B cell (primary cell): ENCODE measurements at regions of chr9 and their contacts with region 1.

Region 1: DNA sequence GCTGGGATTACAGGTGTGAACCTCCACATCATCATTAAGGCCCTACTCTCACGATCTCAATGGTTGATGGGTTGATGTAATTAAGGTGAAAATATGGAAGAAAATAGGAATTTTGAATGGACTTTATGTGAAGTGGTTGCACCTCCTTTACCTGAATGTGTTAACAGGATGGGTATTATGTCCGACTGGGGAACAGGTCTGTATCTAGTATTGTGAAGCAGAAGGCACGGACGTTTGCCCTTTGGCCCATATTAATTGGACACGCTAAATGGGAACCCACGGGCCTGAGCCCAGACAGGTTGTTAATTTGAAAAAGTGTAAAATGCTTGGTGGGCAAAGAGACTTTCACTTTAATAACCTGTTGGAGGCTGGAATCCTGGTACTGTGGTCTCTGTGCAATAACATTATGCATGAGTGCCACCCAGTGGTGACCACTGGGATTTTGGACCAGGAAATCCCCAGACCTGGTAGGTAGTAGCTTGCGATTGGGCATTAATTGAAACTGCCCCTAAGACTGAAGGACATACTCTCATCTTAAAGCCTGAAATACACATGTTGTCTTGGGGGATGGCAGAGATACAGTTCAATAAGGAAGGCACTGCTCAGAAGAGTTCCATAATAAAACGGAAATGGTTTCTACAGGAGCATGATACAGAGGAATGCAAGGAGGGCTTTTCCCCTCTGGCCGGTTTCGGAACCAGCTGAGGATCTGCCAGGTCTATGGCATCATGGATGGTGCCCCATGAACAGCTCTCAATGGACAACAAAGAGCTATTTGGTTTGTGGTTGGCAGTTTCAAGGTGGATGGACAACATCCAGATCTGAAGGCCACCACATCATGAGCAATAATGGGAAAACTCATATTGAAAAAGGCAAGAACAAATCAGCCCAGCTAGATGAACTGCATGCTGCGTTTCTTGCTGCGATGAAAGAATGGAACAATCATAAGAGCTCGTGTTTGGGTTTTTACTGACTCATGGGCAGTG is 26.2 kb upstream of the BICD2 start:
- DNase-seq: peak; percentile 88
- ATAC-seq: peak; percentile 97
- H3K4me3 ChIP-seq: no peak overlapping the region
- H3K4me3 Mint-ChIP-seq: no peak overlapping the region
- H3K27ac ChIP-seq: no peak overlapping the region
- H3K27ac Mint-ChIP-seq: no peak overlapping the region
- H3K4me1 ChIP-seq: peaks cover 3 to 7% of the 10 kb centered on the region in 2 donors
- H3K4me1 Mint-ChIP-seq: peaks cover 3% of the 10 kb centered on the region
- H3K27me3 ChIP-seq: peaks cover 0 to 7% (median 0%) of the 10 kb centered on the region in 4 experiments
- H3K27me3 Mint-ChIP-seq: peaks cover 24% of the 10 kb centered on the region
- CTCF ChIP-seq: peak; percentile 87

Region 2: DNA sequence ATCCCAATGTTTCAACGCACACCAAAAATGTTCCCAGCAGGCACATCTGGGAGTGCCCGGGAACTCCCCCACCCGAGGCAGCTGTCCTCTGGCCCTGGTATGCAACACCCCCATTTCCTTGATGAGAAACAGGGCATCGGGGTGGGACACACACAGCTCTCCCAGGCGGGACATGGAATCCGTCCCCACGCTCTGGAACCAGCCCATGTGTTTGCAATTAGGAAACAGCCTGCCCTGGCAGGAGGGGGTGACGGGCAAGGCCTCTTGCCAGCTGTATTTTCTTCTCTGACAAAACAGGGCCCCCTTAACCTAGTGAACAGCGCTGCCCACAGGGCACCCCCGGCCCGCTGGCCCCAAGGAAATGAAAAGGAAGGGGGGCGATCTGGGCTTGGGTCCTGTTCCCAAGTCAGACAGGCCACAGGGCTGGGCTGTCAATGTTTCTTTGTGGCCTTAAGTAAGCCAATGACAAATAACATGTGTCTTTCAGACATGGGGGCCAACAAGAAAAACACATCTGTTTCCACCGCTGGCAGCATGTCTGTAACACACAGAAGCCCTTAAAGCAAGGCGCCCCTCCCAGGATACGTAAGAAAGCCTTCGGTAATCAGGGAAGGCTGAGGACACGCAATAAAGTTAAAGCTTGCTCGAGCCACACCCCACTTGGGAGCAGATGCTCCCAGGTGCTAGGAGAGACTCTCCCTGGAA is 966.1 kb before region 1 on chr9:
- CTCF ChIA-PET with region 1: no interaction called
- POLR2A ChIA-PET with region 1: no interaction called
- intact Hi-C with region 1: no loop called
- DNase-seq: no peak
- ATAC-seq: no peak
- H3K4me3 ChIP-seq: no peak overlapping the region
- H3K4me3 Mint-ChIP-seq: no peak overlapping the region
- H3K27ac ChIP-seq: no peak overlapping the region
- H3K27ac Mint-ChIP-seq: no peak overlapping the region
- H3K4me1 ChIP-seq: no peaks in the 10 kb centered on the region
- H3K4me1 Mint-ChIP-seq: no peaks in the 10 kb centered on the region
- H3K27me3 ChIP-seq: no peaks in the 10 kb centered on the region
- H3K27me3 Mint-ChIP-seq: peaks cover 28% of the 10 kb centered on the region
- CTCF ChIP-seq: no peak

Region 3: GRCh38 chr9:92140074-92140753 is 650.6 kb before region 1 on chr9:
- CTCF ChIA-PET with region 1: interaction called, 5 read pairs
- POLR2A ChIA-PET with region 1: no interaction called
- intact Hi-C with region 1: loop called (anchors 5 kb)
- DNase-seq: peak; percentile 79
- ATAC-seq: peak; percentile 68
- H3K4me3 ChIP-seq: peak overlapping the region in 2 of 5 experiments; percentile 19 to 48
- H3K4me3 Mint-ChIP-seq: peak overlapping the region; percentile 79
- H3K27ac ChIP-seq: no peak overlapping the region
- H3K27ac Mint-ChIP-seq: no peak overlapping the region
- H3K4me1 ChIP-seq: peaks cover 9 to 16% of the 10 kb centered on the region in 2 donors
- H3K4me1 Mint-ChIP-seq: peaks cover 12% of the 10 kb centered on the region
- H3K27me3 ChIP-seq: peaks cover 0 to 29% (median 8%) of the 10 kb centered on the region in 4 experiments
- H3K27me3 Mint-ChIP-seq: peaks cover 43% of the 10 kb centered on the region
- CTCF ChIP-seq: peak; percentile 95

Region 4: GRCh38 chr9:92716557-92716956 is 74.3 kb before region 1 on chr9:
- CTCF ChIA-PET with region 1: interaction called, 203 read pairs
- POLR2A ChIA-PET with region 1: no interaction called
- intact Hi-C with region 1: loop called (anchors 1 kb)
- DNase-seq: peak; percentile 82
- ATAC-seq: peak; percentile 79
- H3K4me3 ChIP-seq: no peak overlapping the region
- H3K4me3 Mint-ChIP-seq: no peak overlapping the region
- H3K27ac ChIP-seq: no peak overlapping the region
- H3K27ac Mint-ChIP-seq: no peak overlapping the region
- H3K4me1 ChIP-seq: peaks cover 31 to 66% of the 10 kb centered on the region in 2 donors
- H3K4me1 Mint-ChIP-seq: peaks cover 54% of the 10 kb centered on the region
- H3K27me3 ChIP-seq: no peaks in the 10 kb centered on the region
- H3K27me3 Mint-ChIP-seq: no peaks in the 10 kb centered on the region
- CTCF ChIP-seq: peak; percentile 93

Region 5: DNA sequence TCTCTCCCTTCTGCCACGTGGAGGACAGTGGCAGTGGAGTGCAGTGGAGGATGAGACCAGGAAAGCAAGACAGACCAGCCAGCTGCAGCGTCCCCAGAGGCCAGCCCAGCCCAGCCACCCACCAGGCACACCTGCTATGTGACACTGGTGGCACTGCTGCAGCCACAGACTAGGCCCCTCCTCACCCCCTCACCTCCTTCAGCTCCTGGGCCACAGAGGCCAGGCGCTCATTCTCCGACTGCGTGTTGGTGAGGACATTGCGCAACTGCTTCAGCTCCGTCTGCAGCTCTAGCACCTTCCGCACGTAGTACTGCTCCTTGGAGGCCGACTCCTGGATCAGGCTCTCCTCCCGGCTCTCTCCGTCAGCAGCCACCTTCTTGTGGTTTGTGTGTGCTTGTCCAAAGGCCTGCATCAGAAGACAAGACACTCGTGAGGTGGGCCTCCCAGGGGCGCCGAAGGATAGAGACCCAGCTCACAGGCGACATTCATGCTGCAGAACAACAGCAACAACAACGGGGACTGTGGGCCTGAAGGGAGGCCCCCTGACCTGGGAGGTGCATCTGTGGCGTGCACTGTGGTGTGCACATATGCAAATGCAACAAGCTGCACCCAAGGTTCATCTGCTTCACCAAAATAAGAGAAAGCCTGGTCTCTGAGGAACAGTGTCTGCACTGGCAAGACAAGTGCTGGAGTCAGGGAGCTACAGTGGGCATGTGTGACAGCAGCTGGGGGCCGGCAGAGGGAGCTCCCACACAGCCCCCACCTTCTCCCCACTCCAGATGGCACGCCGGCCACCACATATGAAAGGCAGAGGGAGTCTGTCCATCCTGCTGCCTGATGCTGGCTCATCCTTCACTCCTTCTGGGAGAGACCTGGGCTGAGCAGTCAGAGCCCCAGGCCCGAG is 61.8 kb before region 1 on chr9:
- CTCF ChIA-PET with region 1: interaction called, 241 read pairs
- POLR2A ChIA-PET with region 1: interaction called, 4 read pairs
- intact Hi-C with region 1: loop called (anchors 1 kb)
- DNase-seq: peak; percentile 80
- ATAC-seq: peak; percentile 92
- H3K4me3 ChIP-seq: peak overlapping the region in 4 of 5 experiments; percentile 31 to 67 (median 52)
- H3K4me3 Mint-ChIP-seq: peak overlapping the region; percentile 91
- H3K27ac ChIP-seq: peak overlapping the region; percentile 58 to 76
- H3K27ac Mint-ChIP-seq: peak overlapping the region; percentile 95
- H3K4me1 ChIP-seq: peaks cover 63 to 81% of the 10 kb centered on the region in 2 donors
- H3K4me1 Mint-ChIP-seq: peaks cover 84% of the 10 kb centered on the region
- H3K27me3 ChIP-seq: no peaks in the 10 kb centered on the region
- H3K27me3 Mint-ChIP-seq: no peaks in the 10 kb centered on the region
- CTCF ChIP-seq: peak; percentile 78

Region 6: DNA sequence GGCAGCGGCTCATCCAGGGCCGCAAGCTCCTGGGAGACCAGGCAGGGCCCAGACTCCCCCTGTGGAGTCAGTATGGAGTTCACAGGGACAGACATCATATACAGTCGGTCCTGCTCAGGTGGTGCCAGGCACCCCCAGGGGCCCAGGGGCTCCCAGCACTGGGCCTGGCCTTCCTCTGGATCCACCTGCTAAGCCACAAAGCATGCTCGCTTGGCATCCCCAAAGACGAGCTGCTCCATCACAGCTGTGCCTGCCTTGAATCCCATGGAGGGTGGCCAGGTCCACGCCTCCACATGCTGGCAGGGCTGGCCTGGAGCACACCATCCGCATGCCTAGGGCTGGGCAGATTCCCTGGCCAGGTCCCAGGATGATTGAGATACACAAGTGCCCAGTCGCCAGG is 30.8 kb before region 1 on chr9:
- CTCF ChIA-PET with region 1: interaction called, 34 read pairs
- POLR2A ChIA-PET with region 1: interaction called, 5 read pairs
- intact Hi-C with region 1: loop called (anchors 1 kb)
- DNase-seq: no peak
- ATAC-seq: no peak
- H3K4me3 ChIP-seq: no peak overlapping the region
- H3K4me3 Mint-ChIP-seq: no peak overlapping the region
- H3K27ac ChIP-seq: no peak overlapping the region
- H3K27ac Mint-ChIP-seq: no peak overlapping the region
- H3K4me1 ChIP-seq: peaks cover 32 to 59% of the 10 kb centered on the region in 2 donors
- H3K4me1 Mint-ChIP-seq: peaks cover 60% of the 10 kb centered on the region
- H3K27me3 ChIP-seq: no peaks in the 10 kb centered on the region
- H3K27me3 Mint-ChIP-seq: no peaks in the 10 kb centered on the region
- CTCF ChIP-seq: no peak

Region 7: GRCh38 chr9:92770360-92770995 is 20.4 kb before region 1 on chr9:
- CTCF ChIA-PET with region 1: interaction called, 36 read pairs
- POLR2A ChIA-PET with region 1: interaction called, 5 read pairs
- intact Hi-C with region 1: loop called (anchors 1 kb)
- DNase-seq: peak; percentile 82
- ATAC-seq: peak; percentile 94
- H3K4me3 ChIP-seq: peak overlapping the region in 3 of 5 experiments; percentile 2 to 17 (median 12)
- H3K4me3 Mint-ChIP-seq: peak overlapping the region; percentile 74
- H3K27ac ChIP-seq: peak overlapping the region; percentile 79 to 88
- H3K27ac Mint-ChIP-seq: peak overlapping the region; percentile 97
- H3K4me1 ChIP-seq: peaks cover 31 to 40% of the 10 kb centered on the region in 2 donors
- H3K4me1 Mint-ChIP-seq: peaks cover 44% of the 10 kb centered on the region
- H3K27me3 ChIP-seq: no peaks in the 10 kb centered on the region
- H3K27me3 Mint-ChIP-seq: no peaks in the 10 kb centered on the region
- CTCF ChIP-seq: no peak

Region 8: GRCh38 chr9:92780206-92780605 is 10.6 kb before region 1 on chr9:
- CTCF ChIA-PET with region 1: interaction called, 14 read pairs
- POLR2A ChIA-PET with region 1: interaction called, 5 read pairs
- intact Hi-C with region 1: no loop called
- DNase-seq: no peak
- ATAC-seq: no peak
- H3K4me3 ChIP-seq: no peak overlapping the region
- H3K4me3 Mint-ChIP-seq: no peak overlapping the region
- H3K27ac ChIP-seq: no peak overlapping the region
- H3K27ac Mint-ChIP-seq: no peak overlapping the region
- H3K4me1 ChIP-seq: peaks cover 3 to 4% of the 10 kb centered on the region in 2 donors
- H3K4me1 Mint-ChIP-seq: peaks cover 5% of the 10 kb centered on the region
- H3K27me3 ChIP-seq: no peaks in the 10 kb centered on the region
- H3K27me3 Mint-ChIP-seq: no peaks in the 10 kb centered on the region
- CTCF ChIP-seq: no peak

Region 9: GRCh38 chr9:92829420-92829819 is 38.6 kb after region 1 on chr9:
- CTCF ChIA-PET with region 1: no interaction called
- POLR2A ChIA-PET with region 1: no interaction called
- intact Hi-C with region 1: no loop called
- DNase-seq: no peak
- ATAC-seq: no peak
- H3K4me3 ChIP-seq: no peak overlapping the region
- H3K4me3 Mint-ChIP-seq: no peak overlapping the region
- H3K27ac ChIP-seq: no peak overlapping the region
- H3K27ac Mint-ChIP-seq: no peak overlapping the region
- H3K4me1 ChIP-seq: no peaks in the 10 kb centered on the region
- H3K4me1 Mint-ChIP-seq: no peaks in the 10 kb centered on the region
- H3K27me3 ChIP-seq: peaks cover 0 to 3% (median 0%) of the 10 kb centered on the region in 4 experiments
- H3K27me3 Mint-ChIP-seq: peaks cover 15% of the 10 kb centered on the region
- CTCF ChIP-seq: no peak

Region 10: DNA sequence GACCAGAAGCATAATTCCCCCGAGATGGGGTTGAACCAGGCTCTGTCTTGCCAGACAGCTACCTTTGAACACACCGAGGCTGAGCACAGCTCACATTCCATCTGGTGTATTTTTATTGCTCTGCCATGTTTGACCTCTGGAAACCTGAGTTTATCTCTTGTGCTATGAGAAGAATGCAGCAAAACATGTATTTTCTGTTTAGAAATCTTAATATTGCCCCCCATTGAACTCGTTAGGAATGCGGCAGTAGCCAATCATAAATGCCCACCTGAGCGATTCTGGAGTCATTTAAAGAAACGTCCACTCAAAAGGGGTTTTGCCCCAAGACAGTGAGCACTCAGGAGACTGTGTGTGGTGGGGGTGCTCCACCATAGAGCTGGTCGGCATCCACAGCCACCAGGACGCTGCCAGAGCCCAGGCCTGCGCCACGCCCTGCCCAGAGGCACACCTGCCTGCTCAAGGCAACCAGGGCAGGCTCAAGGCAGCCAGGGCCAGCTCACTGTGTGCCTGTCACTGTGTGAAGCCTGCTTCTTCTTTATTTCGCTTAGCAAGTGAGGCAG is 183.4 kb after region 1 on chr9:
- CTCF ChIA-PET with region 1: no interaction called
- POLR2A ChIA-PET with region 1: no interaction called
- intact Hi-C with region 1: no loop called
- DNase-seq: no peak
- ATAC-seq: no peak
- H3K4me3 ChIP-seq: no peak overlapping the region
- H3K4me3 Mint-ChIP-seq: no peak overlapping the region
- H3K27ac ChIP-seq: no peak overlapping the region
- H3K27ac Mint-ChIP-seq: no peak overlapping the region
- H3K4me1 ChIP-seq: peaks cover 34 to 44% of the 10 kb centered on the region in 2 donors
- H3K4me1 Mint-ChIP-seq: peaks cover 71% of the 10 kb centered on the region
- H3K27me3 ChIP-seq: no peaks in the 10 kb centered on the region
- H3K27me3 Mint-ChIP-seq: no peaks in the 10 kb centered on the region
- CTCF ChIP-seq: no peak

Region 11: GRCh38 chr9:93116072-93116961 is 325.5 kb after region 1 on chr9:
- CTCF ChIA-PET with region 1: no interaction called
- POLR2A ChIA-PET with region 1: no interaction called
- intact Hi-C with region 1: no loop called
- DNase-seq: no peak
- ATAC-seq: no peak
- H3K4me3 ChIP-seq: no peak overlapping the region
- H3K4me3 Mint-ChIP-seq: no peak overlapping the region
- H3K27ac ChIP-seq: no peak overlapping the region
- H3K27ac Mint-ChIP-seq: no peak overlapping the region
- H3K4me1 ChIP-seq: peaks cover 20 to 27% of the 10 kb centered on the region in 2 donors
- H3K4me1 Mint-ChIP-seq: peaks cover 20% of the 10 kb centered on the region
- H3K27me3 ChIP-seq: no peaks in the 10 kb centered on the region
- H3K27me3 Mint-ChIP-seq: no peaks in the 10 kb centered on the region
- CTCF ChIP-seq: no peak